Calu3 (cell line): ENCODE measurements at regions of chr4 and their contacts with region 1.

Region 1: GRCh38 chr4:125762537-125762936 is 447.8 kb downstream of the FAT4 start:
- DNase-seq: no peak
- H3K4me3 Mint-ChIP-seq: no peak overlapping the region
- H3K27ac Mint-ChIP-seq: no peak overlapping the region
- H3K4me1 Mint-ChIP-seq: no peaks in the 10 kb centered on the region
- H3K27me3 Mint-ChIP-seq: no peaks in the 10 kb centered on the region
- CTCF ChIP-seq: no peak

Region 2: GRCh38 chr4:125979950-125980349 is 217.4 kb after region 1 on chr4:
- CTCF ChIA-PET with region 1: no interaction called
- intact Hi-C with region 1: loop called (anchors 5 kb)
- DNase-seq: no peak
- H3K4me3 Mint-ChIP-seq: no peak overlapping the region
- H3K27ac Mint-ChIP-seq: no peak overlapping the region
- H3K4me1 Mint-ChIP-seq: peaks cover 8% of the 10 kb centered on the region
- H3K27me3 Mint-ChIP-seq: no peaks in the 10 kb centered on the region
- CTCF ChIP-seq: no peak